RWPE1 (cell line): ENCODE measurements at regions of chr20 and their contacts with region 1.

Region 1: DNA sequence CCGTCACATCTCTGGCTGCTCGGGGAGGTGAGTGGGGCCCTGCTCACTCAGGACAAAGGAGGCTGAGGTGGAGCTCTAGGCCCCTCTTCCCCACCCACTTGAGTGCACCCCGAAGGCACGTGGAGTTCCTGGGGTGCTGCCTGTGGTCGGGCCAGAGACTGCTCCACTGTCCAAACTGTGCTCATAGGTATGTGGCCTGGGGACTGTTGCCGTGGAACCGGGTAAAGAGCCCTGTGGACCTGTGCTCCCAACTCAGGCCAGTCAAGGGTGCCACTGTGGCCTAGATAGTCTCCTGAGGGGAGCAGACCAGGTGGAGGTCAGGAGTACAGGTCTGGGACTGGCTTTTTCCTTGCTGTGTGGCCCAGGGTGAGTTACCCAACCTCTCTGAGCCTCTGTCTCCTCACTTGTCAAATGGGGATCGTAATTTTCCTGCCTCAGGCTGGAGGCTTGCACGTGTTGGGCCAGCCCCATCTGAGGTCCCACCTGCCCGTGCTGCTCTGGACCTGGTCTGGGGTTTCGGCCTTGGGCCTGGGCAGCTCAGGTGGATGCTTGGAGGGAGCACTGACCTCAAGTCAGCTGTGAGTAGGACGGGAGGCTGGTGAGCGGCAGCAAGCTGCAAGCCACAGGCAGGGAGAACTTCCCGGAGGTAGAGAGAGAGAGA is 12.4 kb upstream of the NPBWR2 start:
- DNase-seq: no peak
- H3K27ac ChIP-seq: no peak overlapping the region; the same call in 1 of the 2 replicates
- CTCF ChIP-seq: no peak

Region 2: DNA sequence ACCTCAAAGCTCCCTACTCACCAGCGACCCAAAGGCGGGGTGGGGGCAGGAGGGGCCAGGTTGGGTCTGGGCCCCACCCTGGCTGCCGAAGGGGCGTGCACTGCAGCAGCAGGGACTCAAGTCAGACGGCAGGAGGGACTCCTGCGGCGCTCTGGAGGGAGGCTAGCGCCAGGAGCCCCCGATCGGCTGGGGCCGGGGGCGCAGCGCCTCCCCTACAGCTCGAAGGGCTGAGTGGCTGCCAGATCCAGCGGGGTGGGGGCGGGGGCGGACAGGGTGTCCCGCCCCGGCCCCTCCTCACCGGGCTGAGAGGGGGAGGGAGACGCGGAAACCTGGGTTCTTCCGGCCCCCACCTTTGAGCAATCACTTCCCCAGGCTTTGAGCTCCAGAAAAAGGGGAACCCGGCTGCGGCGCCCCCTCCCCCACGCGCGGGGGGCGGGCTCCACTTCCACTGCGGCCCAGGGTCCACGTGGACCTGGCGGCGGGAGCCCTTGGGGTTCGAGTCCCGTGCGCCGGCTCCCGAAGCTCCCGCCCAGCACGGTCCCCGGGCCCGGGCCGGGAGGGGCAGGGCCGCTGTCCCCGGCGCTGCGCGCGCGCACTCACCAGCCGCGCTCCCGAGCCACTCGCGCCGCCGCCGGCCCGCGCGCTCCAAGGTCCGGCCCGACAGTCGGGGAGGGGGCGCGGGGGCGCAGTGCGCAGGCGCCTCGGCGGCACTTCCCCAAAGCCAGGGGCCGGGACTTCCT is 40.4 kb before region 1 on chr20 and contains the start of gene RGS19:
- CTCF ChIA-PET with region 1: interaction called, 59 read pairs
- POLR2A ChIA-PET with region 1: no interaction called
- DNase-seq: no peak
- H3K27ac ChIP-seq: peak within 1 kb of the TSS; percentile 77
- CTCF ChIP-seq: no peak

Region 3: DNA sequence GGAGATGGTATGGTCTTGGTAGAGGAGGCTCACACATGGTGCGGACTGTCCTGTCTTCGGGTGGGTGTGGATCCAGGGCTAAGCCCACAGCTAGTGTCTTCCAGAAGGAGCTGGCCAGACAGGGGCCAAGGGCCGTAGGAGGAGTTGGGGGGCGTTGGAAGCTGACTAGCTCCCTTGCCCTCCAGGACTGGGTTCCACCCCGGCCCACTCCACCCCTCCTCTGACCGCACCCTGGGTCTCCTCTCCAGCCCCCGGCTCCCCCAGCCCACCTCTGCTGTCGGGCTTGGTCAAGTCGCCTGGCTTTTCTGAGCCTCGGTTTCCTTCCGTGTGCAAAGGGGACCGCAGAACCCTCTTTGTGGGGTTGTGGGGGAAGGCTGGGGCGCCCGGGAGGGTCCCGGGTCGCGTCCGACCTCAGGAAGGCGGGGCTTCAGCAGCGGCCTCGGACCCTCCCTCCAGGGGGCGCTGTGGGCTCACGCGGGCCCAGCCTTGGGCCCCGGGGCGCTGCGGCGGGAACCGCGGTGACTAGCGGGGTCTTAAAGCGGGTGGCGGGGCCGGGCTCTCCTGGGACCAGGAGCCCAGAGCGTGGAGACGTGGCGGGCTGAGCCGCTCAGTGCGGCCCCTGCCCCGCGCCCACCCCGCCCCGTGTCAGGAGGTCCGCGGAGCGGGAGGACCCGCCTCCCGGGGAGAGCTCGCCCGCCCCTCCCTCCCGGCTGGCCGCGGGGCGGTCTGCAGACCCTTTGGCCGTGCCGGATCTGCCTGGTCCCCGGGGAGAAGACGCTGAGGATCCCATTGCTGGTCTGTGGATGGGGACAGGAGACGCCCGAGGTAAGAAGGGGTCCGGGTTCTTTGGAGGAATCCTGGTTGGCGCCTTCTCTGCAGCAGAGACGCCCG is 17.8 kb before region 1 on chr20:
- CTCF ChIA-PET with region 1: interaction called, 11 read pairs
- POLR2A ChIA-PET with region 1: no interaction called
- DNase-seq: peak; percentile 73
- H3K27ac ChIP-seq: no peak overlapping the region
- CTCF ChIP-seq: peak; percentile 73